ENCODE measurements at regions of chr5 and their contacts with region 1.

Region 1: DNA sequence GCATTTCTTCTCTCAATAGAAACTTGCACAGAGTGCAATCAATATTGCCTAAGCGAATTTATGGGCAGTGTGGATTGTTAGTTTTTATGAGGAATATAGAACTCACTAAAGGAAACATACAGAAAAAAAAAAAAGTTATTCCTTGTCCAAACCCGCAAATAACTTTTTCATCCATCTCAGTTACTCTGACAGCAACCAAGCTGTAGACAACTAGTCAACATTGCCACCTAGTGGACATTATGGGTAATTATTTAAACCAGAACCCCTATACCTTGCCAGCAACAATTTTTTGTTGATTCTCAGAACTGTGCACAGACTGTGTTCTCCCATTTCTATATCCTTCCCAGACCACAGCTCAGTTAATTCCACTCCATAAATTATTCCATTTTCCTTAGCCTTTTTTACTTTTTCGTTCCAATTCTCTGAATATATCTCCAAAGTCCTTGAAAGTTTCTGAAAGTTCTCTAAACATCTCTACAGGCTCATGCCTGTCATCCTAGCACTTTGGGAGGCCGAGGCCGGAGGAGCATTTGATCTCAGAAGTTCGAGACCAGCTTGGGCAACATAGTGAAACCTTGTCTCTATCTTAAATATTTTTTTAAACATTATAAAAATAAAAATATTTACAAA is 2.6 kb upstream of the AFAP1L1 start:
- DNase-seq: no peak
- H3K4me3 Mint-ChIP-seq: no peak overlapping the region
- H3K27ac Mint-ChIP-seq: no peak overlapping the region
- H3K4me1 Mint-ChIP-seq: peaks cover 16% of the 10 kb centered on the region
- H3K27me3 Mint-ChIP-seq: peaks cover 20% of the 10 kb centered on the region

Region 2: DNA sequence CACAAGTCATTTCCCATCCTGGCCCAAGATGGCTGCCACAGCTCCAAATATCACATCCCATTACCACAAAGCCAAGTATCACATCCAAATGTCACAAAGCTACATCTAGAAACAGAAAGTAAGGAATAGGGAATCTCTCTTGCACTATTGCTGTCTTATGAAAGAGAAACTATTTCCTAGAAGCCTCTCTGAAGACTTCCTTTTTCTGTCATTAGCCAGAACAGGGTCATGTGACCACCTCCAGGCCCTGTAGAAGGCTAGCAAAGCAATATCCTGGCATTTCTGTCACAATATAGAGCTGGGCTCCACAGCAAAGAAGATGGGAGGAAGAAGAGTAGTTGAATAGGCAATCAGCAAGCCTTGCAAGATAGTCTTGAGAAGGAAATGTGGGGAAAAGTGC is 305.4 kb before region 1 on chr5:
- CTCF ChIA-PET with region 1: interaction called, 5 read pairs
- intact Hi-C with region 1: loop called (anchors 5 kb)
- DNase-seq: no peak
- H3K4me3 Mint-ChIP-seq: no peak overlapping the region
- H3K27ac Mint-ChIP-seq: no peak overlapping the region
- H3K4me1 Mint-ChIP-seq: peaks cover 2% of the 10 kb centered on the region
- H3K27me3 Mint-ChIP-seq: peaks cover 3% of the 10 kb centered on the region

Region 3: GRCh38 chr5:149228618-149229297 is 40.3 kb before region 1 on chr5:
- CTCF ChIA-PET with region 1: no interaction called
- intact Hi-C with region 1: loop called (anchors 5 kb)
- DNase-seq: no peak
- H3K4me3 Mint-ChIP-seq: no peak overlapping the region
- H3K27ac Mint-ChIP-seq: no peak overlapping the region
- H3K4me1 Mint-ChIP-seq: peaks cover 8% of the 10 kb centered on the region
- H3K27me3 Mint-ChIP-seq: no peaks in the 10 kb centered on the region

Region 4: GRCh38 chr5:149254506-149254905 is 14.5 kb before region 1 on chr5:
- CTCF ChIA-PET with region 1: interaction called, 13 read pairs
- intact Hi-C with region 1: no loop called
- DNase-seq: peak; percentile 37
- H3K4me3 Mint-ChIP-seq: no peak overlapping the region
- H3K27ac Mint-ChIP-seq: no peak overlapping the region
- H3K4me1 Mint-ChIP-seq: no peaks in the 10 kb centered on the region
- H3K27me3 Mint-ChIP-seq: no peaks in the 10 kb centered on the region

Measured in activated naive CD4-positive, alpha-beta T cell treated with anti-CD3 and anti-CD28 coated beads for 36 hours (primary cell).